ENCODE measurements at regions of chr13 and their contacts with region 1.

Region 1: DNA sequence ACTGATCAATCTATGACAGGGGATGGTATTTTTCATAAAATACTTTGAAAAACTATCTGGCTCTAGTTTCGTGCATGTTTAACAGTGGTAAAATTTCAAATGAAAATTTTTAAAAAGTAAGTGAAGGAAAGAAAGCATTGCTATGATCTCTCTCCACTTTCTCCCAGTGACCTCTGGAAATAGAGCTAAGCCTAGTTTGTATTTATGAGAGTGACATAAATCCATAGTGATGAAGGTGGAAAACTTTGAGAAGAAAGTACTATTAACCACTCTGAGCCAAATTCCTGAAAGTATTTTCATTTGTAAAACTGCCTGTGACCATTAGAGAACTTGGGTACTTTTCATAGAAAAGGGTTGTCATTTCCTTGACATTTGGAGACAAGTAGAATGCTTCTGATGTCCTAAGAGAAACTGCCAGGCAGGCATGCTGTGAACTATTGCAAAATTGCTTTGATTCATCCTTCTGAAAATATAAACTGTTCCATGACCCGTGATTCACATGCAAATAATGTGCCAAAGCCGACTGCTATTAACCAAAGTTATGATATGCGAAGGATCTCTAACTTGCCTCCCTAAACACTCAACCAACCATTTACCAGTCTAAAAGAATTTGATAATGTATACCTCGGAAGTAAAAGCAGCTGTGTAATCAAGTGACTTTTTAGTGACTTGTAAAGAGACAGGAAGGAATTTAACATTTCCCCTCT is 133.2 kb downstream of the VWA8 start:
- DNase-seq: no peak
- H3K4me3 ChIP-seq: no peak overlapping the region
- H3K27ac ChIP-seq: peak overlapping the region in 3 of 4 donors; percentile 26 to 61 (median 32)
- H3K4me1 ChIP-seq: peaks cover 0 to 15% (median 11%) of the 10 kb centered on the region in 4 donors
- H3K27me3 ChIP-seq: no peaks in the 10 kb centered on the region
- CTCF ChIP-seq: no peak
- EP300 ChIP-seq: no peak
- POLR2A ChIP-seq: no peak

Region 2: GRCh38 chr13:41678249-41678648 is 149.4 kb before region 1 on chr13:
- intact Hi-C with region 1: loop called (anchors 10 kb)
- DNase-seq: no peak
- H3K4me3 ChIP-seq: no peak overlapping the region
- H3K27ac ChIP-seq: peak overlapping the region; percentile 46 to 72 (median 53)
- H3K4me1 ChIP-seq: peaks cover 0 to 21% (median 18%) of the 10 kb centered on the region in 4 donors
- H3K27me3 ChIP-seq: no peaks in the 10 kb centered on the region
- CTCF ChIP-seq: no peak
- EP300 ChIP-seq: no peak
- POLR2A ChIP-seq: no peak

Region 3: GRCh38 chr13:41864658-41865057 is 37.0 kb after region 1 on chr13:
- intact Hi-C with region 1: no loop called
- DNase-seq: no peak
- H3K4me3 ChIP-seq: no peak overlapping the region
- H3K27ac ChIP-seq: no peak overlapping the region
- H3K4me1 ChIP-seq: no peaks in the 10 kb centered on the region
- H3K27me3 ChIP-seq: no peaks in the 10 kb centered on the region
- CTCF ChIP-seq: no peak
- EP300 ChIP-seq: no peak
- POLR2A ChIP-seq: no peak